CD4-positive, alpha-beta T cell (primary cell): ENCODE measurements at regions of chr1 and their contacts with region 1.

Region 1: DNA sequence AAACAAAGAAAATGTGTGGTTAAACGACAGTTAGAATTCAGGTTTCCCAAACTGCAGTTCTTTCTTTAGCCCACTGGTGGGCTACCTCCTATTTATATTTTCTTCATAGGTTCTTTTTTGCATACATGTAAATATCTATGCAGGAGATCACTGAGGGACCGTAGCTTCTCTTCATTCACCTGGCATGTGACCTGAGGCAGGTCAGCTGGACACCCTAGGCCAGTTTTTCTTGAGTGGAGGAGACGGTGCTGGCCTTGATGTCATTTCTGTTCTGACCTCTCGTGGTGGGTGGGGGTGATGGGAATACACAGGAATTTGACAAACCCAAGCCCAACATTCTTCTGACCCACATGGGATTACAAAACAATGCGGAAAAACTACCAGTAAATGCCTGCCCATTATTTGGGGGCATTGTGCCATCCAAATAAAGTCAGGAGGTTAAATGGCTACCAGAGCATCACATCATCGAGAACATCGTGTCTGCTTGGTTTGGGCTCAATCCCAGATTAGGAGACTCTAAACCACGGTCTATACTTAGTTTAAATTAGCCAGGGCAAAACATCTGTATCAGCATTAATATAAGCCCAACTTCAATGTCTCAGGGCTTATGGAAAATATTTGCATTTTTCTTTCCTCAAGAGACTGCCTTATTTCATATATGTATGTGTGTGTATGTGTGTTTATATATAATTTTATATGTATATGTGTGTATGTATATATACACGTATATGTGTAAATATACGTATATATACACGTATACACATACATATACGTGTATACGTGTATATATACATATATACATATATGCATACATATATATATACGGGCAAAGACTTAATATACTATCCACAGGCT is 7.4 kb upstream of the IRF2BP2 start:
- DNase-seq: no peak
- ATAC-seq: no peak
- H3K4me3 ChIP-seq: no peak overlapping the region
- H3K4me3 Mint-ChIP-seq: no peak overlapping the region
- H3K27ac ChIP-seq: no peak overlapping the region
- H3K27ac Mint-ChIP-seq: no peak overlapping the region
- H3K4me1 ChIP-seq: peaks cover 13% of the 10 kb centered on the region
- H3K4me1 Mint-ChIP-seq: peaks cover 29% of the 10 kb centered on the region
- H3K27me3 ChIP-seq: no peaks in the 10 kb centered on the region
- H3K27me3 Mint-ChIP-seq: no peaks in the 10 kb centered on the region
- CTCF ChIP-seq: no peak

Region 2: GRCh38 chr1:234638832-234639799 is 21.8 kb after region 1 on chr1:
- CTCF ChIA-PET with region 1: no interaction called
- POLR2A ChIA-PET with region 1: no interaction called
- intact Hi-C with region 1: no loop called
- DNase-seq: no peak
- ATAC-seq: no peak
- H3K4me3 ChIP-seq: no peak overlapping the region
- H3K4me3 Mint-ChIP-seq: no peak overlapping the region
- H3K27ac ChIP-seq: no peak overlapping the region
- H3K27ac Mint-ChIP-seq: no peak overlapping the region
- H3K4me1 ChIP-seq: no peaks in the 10 kb centered on the region
- H3K4me1 Mint-ChIP-seq: peaks cover 3% of the 10 kb centered on the region
- H3K27me3 ChIP-seq: no peaks in the 10 kb centered on the region
- H3K27me3 Mint-ChIP-seq: no peaks in the 10 kb centered on the region
- CTCF ChIP-seq: no peak

Region 3: GRCh38 chr1:234670967-234671626 is 53.7 kb after region 1 on chr1:
- CTCF ChIA-PET with region 1: no interaction called
- POLR2A ChIA-PET with region 1: no interaction called
- intact Hi-C with region 1: loop called in 1 of 2 experiments (anchors 5 kb)
- DNase-seq: no peak
- ATAC-seq: no peak
- H3K4me3 ChIP-seq: no peak overlapping the region
- H3K4me3 Mint-ChIP-seq: no peak overlapping the region
- H3K27ac ChIP-seq: no peak overlapping the region
- H3K27ac Mint-ChIP-seq: no peak overlapping the region
- H3K4me1 ChIP-seq: peaks cover 5% of the 10 kb centered on the region
- H3K4me1 Mint-ChIP-seq: peaks cover 7% of the 10 kb centered on the region
- H3K27me3 ChIP-seq: no peaks in the 10 kb centered on the region
- H3K27me3 Mint-ChIP-seq: no peaks in the 10 kb centered on the region
- CTCF ChIP-seq: no peak

Region 4: GRCh38 chr1:234683861-234684632 is 66.7 kb after region 1 on chr1:
- CTCF ChIA-PET with region 1: no interaction called
- POLR2A ChIA-PET with region 1: interaction called, 3 read pairs
- intact Hi-C with region 1: loop called in 1 of 2 experiments (anchors 2 kb)
- DNase-seq: peak in 3 of 14 experiments; percentile 10 to 68 (median 60)
- ATAC-seq: no peak
- H3K4me3 ChIP-seq: no peak overlapping the region
- H3K4me3 Mint-ChIP-seq: no peak overlapping the region
- H3K27ac ChIP-seq: no peak overlapping the region
- H3K27ac Mint-ChIP-seq: no peak overlapping the region
- H3K4me1 ChIP-seq: no peaks in the 10 kb centered on the region
- H3K4me1 Mint-ChIP-seq: no peaks in the 10 kb centered on the region
- H3K27me3 ChIP-seq: no peaks in the 10 kb centered on the region
- H3K27me3 Mint-ChIP-seq: no peaks in the 10 kb centered on the region
- CTCF ChIP-seq: no peak

Region 5: DNA sequence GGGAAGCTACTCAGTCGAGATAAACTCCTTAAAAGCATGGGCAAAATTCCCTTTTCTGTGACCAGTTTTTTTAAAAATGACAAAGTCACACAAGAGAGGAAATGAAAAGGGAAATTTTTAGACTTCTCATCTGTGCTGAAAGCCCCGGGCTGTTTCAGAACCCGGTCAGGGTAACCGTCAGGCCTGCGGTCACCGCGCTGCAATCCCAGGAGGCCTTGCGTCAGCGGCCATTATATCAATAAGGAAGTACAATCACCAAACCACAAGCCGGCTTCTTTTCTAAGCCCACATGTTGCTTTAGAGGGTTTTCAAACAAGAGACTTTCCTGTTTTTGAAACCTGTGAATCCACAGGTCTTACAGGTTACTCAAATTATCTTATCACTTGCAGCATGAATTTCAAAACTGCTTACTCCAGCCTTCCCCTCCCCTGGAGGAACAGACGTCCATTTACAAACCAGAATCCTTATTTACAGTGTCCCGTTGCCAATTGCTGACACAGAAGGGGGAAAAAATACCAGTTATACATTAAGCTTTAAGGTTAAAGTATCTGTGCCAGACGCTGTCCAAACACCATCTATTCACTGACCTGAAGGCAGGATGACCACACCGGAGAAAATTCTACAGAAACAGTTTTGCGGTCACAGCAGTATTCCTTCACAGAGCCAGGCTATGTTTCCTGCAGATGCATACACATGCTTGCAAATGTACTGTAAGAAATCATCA is 346.0 kb after region 1 on chr1:
- CTCF ChIA-PET with region 1: no interaction called
- POLR2A ChIA-PET with region 1: no interaction called
- intact Hi-C with region 1: no loop called
- DNase-seq: peak; percentile 59 to 97 (median 78)
- ATAC-seq: peak; percentile 79
- H3K4me3 ChIP-seq: peak overlapping the region; percentile 25
- H3K4me3 Mint-ChIP-seq: peak overlapping the region; percentile 78
- H3K27ac ChIP-seq: peak overlapping the region; percentile 71 to 81
- H3K27ac Mint-ChIP-seq: peak overlapping the region; percentile 90
- H3K4me1 ChIP-seq: peaks cover 63% of the 10 kb centered on the region
- H3K4me1 Mint-ChIP-seq: peaks cover 66% of the 10 kb centered on the region
- H3K27me3 ChIP-seq: no peaks in the 10 kb centered on the region
- H3K27me3 Mint-ChIP-seq: no peaks in the 10 kb centered on the region
- CTCF ChIP-seq: no peak